Panc1 (cell line): ENCODE measurements at regions of chr21 and their contacts with region 1.

Region 1: DNA sequence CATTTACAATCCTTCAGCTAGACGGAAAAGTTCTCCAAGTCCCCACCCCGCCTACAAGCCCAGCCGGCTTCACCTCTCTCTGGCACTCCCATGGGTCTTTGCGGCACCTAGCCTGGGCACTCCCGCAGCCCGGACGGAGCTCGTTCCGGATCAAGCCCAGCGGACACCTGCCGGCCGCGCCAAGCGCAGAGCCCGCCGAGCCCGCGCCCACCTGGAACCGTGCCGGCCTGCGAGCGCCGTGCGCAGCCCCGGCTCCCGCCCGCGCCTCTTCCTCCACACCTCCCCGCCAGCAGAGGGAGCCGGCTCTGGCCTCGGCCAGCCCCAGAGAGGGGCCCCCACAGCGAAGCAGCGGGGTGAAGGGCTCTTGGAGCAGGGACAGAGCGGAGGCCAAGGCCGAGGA is 50.0 kb upstream of the KRTAP19-8 start:
- DNase-seq: no peak
- ATAC-seq: no peak
- H3K4me3 ChIP-seq: no peak overlapping the region
- H3K27ac ChIP-seq: no peak overlapping the region
- H3K4me1 ChIP-seq: no peaks in the 10 kb centered on the region
- H3K27me3 ChIP-seq: no peaks in the 10 kb centered on the region
- CTCF ChIP-seq: no peak

Region 2: DNA sequence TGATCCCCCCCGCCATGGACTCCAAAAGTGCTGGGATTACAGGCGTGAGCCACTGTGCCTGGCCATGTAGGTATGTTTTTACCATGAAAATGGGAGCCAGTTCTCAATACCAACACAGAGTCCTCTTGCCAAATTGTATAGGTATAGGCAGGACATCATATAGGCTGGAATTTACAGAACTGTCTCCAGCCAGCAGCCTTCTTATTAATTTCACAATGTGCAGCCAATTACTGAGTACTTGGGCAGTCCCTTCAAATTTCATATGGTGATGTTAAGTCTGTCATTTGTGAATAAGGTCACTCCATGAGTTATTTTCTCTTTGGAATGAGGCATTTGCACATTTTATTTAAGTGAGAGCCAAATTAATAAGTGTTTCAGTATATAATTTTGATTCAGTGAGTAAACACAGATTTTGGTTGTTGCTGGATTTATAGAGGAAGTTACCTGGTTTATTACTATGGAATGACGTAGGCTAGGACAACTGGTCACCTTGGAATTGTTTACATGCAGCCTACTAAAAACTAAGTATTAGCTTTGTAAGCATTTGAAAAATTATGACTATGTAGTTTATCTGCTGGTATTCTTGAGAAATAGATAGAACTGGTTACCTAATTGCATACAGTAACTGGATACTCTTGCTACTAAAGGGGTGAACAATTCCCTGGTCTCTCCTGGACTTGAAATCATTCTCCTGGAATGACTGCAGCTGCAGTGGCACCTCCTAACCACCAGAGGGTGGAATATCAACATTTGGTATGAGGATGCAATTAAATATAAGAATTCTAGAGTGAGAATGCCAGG is 747.7 kb before region 1 on chr21:
- CTCF ChIA-PET with region 1: interaction called, 12 read pairs
- POLR2A ChIA-PET with region 1: no interaction called
- in situ Hi-C with region 1: no loop called
- intact Hi-C with region 1: no loop called
- DNase-seq: peak; percentile 2
- ATAC-seq: no peak
- H3K4me3 ChIP-seq: no peak overlapping the region
- H3K27ac ChIP-seq: no peak overlapping the region
- H3K4me1 ChIP-seq: no peaks in the 10 kb centered on the region
- H3K27me3 ChIP-seq: no peaks in the 10 kb centered on the region
- CTCF ChIP-seq: peak; percentile 61; the same call in 1 of the 2 replicates

Region 3: GRCh38 chr21:30831194-30831765 is 257.0 kb before region 1 on chr21:
- CTCF ChIA-PET with region 1: no interaction called
- POLR2A ChIA-PET with region 1: no interaction called
- in situ Hi-C with region 1: no loop called
- intact Hi-C with region 1: loop called (anchors 1 kb)
- DNase-seq: no peak
- ATAC-seq: no peak
- H3K4me3 ChIP-seq: no peak overlapping the region
- H3K27ac ChIP-seq: no peak overlapping the region
- H3K4me1 ChIP-seq: no peaks in the 10 kb centered on the region
- H3K27me3 ChIP-seq: no peaks in the 10 kb centered on the region
- CTCF ChIP-seq: peak; percentile 63

Region 4: GRCh38 chr21:30942192-30942591 is 146.1 kb before region 1 on chr21:
- CTCF ChIA-PET with region 1: no interaction called
- POLR2A ChIA-PET with region 1: no interaction called
- in situ Hi-C with region 1: no loop called
- intact Hi-C with region 1: no loop called
- DNase-seq: no peak
- ATAC-seq: no peak
- H3K4me3 ChIP-seq: no peak overlapping the region
- H3K27ac ChIP-seq: no peak overlapping the region
- H3K4me1 ChIP-seq: no peaks in the 10 kb centered on the region
- H3K27me3 ChIP-seq: no peaks in the 10 kb centered on the region
- CTCF ChIP-seq: no peak